K562 (cell line): ENCODE measurements at regions of chr4 and their contacts with region 1.

Region 1: DNA sequence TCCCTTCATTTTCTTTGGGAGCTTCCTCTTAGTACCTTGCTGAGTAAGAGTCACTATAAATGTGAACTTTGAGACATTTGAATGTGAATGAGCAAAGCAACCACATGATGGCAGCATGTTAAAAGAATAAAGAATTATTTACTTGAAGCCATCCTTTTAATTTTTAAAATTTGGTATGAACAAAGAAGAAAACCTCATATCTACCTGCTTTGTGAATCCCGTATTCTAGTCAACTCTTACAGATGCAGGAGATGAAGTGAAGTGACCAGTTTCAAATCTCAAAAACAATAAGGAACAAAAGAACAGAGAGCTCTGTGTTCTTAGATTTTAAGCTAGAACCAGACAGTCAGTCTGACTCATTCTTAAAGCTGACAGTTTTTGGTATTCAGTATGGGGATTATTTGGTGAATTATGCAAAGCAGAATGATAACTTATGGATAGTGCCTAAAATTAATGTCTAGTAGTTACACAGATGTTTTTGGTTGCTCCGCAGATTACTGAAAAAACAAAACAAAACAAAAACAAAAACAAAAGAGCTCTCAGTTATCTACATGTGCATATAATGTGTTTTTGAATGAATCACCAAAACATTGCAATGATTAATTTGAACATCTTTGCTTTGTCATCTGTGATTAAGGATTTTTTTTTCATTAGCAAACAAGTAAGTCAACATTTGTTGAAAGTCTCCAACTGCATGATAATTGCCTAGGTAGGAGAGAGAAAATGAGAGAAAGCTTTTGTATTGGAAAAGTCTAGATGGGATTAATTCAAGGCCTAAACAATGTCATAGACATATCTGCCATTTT is 48.2 kb upstream of the H2AZ1 start:
- DNase-seq: peak in 1 of 4 experiments; percentile 20
- ATAC-seq: peak; percentile 61
- H3K4me3 ChIP-seq: no peak overlapping the region
- H3K27ac ChIP-seq: no peak overlapping the region
- H3K4me1 ChIP-seq: no peaks in the 10 kb centered on the region
- H3K27me3 ChIP-seq: no peaks in the 10 kb centered on the region; a peak in 3 of 5 replicates
- CTCF ChIP-seq: peak; percentile 20 to 52 (median 22); a peak in 3 of 6 replicates
- EP300 ChIP-seq: no peak
- POLR2A ChIP-seq: no peak
- RAD21 ChIP-seq: peak; percentile 39 to 52

Region 2: DNA sequence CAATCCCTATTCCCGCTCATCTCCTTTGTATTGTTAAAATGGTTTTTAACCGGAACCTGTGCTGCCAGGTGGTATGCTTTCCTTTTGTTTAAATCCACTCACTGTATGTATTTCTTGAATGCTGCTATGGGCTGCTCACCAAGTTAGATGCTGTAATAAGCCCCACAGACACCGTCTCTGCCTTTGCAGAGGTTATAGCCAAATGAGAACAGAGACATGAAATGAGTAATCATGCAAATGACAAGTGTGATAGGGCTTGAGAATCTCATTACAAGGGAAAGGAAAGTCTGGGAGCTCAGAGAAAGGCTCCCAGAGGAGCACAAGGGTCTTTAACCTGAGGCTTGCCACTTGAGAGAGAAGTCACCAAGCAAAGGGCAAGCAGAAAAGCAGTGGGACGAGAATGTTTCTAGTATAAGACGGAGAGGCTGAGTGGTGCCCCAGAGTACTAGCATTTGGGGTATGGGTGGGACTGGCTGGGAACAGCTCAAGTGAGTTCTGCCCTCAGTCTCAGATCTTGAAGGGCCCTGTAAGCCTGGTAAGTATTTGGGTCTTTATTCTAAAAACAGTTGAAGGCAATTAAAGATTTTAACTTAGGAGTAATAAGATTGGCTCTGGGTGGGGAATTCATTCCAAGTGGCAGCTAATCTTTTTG is 62.6 kb after region 1 on chr4:
- CTCF ChIA-PET with region 1: no interaction called
- POLR2A ChIA-PET with region 1: no interaction called
- in situ Hi-C with region 1: no loop called
- intact Hi-C with region 1: loop called (anchors 10 kb)
- DNase-seq: no peak
- ATAC-seq: no peak
- H3K4me3 ChIP-seq: no peak overlapping the region
- H3K27ac ChIP-seq: no peak overlapping the region
- H3K4me1 ChIP-seq: no peaks in the 10 kb centered on the region
- H3K27me3 ChIP-seq: no peaks in the 10 kb centered on the region
- CTCF ChIP-seq: no peak
- EP300 ChIP-seq: no peak
- POLR2A ChIP-seq: no peak
- RAD21 ChIP-seq: no peak

Region 3: GRCh38 chr4:100093091-100093866 is 95.0 kb after region 1 on chr4:
- CTCF ChIA-PET with region 1: no interaction called
- POLR2A ChIA-PET with region 1: no interaction called
- in situ Hi-C with region 1: no loop called
- intact Hi-C with region 1: loop called (anchors 5 kb)
- DNase-seq: peak; percentile 55 to 66 (median 61)
- ATAC-seq: peak; percentile 88
- H3K4me3 ChIP-seq: no peak overlapping the region
- H3K27ac ChIP-seq: no peak overlapping the region
- H3K4me1 ChIP-seq: no peaks in the 10 kb centered on the region
- H3K27me3 ChIP-seq: no peaks in the 10 kb centered on the region
- CTCF ChIP-seq: peak; percentile 60 to 76 (median 74)
- EP300 ChIP-seq: no peak
- POLR2A ChIP-seq: no peak
- RAD21 ChIP-seq: peak; percentile 51 to 53

Region 4: DNA sequence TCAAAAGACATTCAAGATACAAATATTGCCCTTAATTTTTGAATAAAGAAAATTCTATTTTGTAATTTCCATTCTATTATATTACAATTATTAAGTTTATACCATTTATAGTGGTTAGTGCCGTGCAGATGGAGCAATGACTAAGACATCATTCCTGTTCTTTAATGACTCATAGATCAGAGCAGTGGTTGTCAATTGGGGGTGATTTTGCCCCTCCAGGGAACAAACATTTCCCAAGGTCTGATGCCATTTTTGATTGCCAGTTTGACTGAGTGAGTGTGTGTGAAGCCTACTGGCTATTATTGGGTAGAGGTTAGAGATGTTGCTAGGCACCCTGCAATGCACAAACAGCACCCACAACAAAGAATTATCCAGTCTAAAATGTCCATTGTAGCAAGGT is 289.9 kb after region 1 on chr4:
- CTCF ChIA-PET with region 1: no interaction called
- POLR2A ChIA-PET with region 1: no interaction called
- in situ Hi-C with region 1: no loop called
- intact Hi-C with region 1: no loop called
- DNase-seq: no peak
- ATAC-seq: no peak
- H3K4me3 ChIP-seq: no peak overlapping the region
- H3K27ac ChIP-seq: no peak overlapping the region
- H3K4me1 ChIP-seq: no peaks in the 10 kb centered on the region
- H3K27me3 ChIP-seq: no peaks in the 10 kb centered on the region
- CTCF ChIP-seq: no peak
- EP300 ChIP-seq: no peak
- POLR2A ChIP-seq: no peak
- RAD21 ChIP-seq: no peak